ENCODE measurements at regions of chr17 and their contacts with region 1.

Region 1: DNA sequence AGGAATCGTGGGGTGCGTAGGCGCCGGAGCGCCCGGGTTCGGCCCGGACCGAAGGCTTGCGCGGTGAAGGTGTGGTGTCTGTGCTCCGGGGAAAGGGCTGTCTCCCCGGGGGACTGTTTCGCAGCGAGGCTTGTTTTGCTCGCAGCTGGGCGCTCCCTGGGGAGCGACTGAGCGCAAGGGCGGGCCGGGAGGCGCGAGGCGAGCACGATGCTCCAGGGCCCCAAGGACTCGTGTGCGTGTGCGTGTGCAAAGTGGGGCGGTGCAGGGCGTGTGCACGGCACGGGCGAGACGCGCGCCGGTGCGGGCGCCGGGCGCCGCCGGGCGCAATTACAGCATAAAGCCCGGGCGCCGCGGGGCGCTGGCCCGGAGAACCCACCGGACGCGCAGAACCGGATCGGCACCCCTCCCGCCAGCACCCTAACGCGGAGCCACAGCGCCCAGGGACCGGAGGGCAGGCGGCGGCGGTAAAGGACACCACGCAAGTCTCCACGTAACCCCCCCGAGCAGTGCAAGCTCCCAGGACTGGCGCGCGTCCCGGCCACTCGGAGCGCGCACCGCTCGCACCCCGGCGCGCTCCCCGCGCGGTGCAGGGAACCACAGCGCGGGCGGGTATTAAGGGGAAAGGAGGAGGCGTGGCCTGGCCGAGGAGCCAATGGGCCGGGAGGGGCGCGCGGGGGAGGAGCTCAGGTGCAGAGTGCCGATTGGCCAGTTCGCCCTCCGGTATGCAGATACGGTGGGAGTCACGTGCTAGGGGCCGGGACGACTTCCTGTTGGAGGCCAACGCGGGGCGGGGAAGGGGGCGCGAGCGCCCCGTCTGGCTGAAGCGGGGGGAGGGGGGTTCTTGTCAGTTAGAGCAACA is at the start of gene TNRC6C:
- DNase-seq: peak; percentile 99 to 100
- H3K4me3 ChIP-seq: peak within 1 kb of the TSS; percentile 54 to 81
- H3K27ac ChIP-seq: peak within 1 kb of the TSS; percentile 77 to 78
- H3K4me1 ChIP-seq: peaks cover 0 to 17% of the 10 kb centered on the region in 2 donors
- H3K27me3 ChIP-seq: no peaks in the 10 kb centered on the region
- CTCF ChIP-seq: peak in 1 of 3 experiments; percentile 16
- total RNA-seq, gene TNRC6C: 25.8 TPM

Region 2: DNA sequence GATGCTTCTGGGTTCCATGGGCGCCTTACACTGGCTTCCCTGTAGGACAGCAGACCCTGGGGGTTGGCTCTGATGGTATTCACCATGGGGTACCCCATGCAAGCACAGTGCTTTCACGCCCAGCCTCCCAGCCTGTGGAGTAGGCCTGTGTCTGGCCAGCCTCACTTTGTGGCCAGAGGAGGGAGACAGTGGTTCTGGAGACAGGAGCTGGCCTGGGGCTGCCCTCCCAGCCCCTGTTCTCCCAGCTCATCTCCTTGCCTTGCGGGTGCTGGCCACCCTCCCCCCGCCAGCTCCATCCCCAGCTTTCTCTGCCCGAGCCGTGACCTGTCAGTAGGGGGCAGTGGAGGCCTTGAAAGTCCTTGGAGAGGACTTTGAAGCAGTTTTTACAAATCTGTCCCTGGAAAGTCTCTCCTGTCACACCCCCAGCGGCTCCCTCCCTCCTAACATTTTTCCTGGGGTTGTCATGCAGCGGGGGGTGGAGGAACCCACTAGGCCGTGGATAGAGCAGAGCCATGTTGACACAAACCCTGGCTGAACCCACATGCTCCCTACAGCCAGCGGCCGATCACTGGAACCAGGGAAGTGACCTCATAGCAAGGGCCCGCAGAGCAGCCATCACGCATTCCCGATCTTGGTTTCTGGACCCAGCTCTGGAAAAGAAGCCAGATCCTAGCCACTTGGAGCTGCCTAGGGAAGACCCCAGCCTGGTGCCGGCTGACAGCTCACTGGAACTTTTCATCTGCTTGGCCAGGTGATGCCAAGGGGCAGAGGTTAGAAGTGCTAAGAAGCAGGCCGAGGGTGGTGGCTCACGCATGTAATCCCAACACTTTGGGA is 528.0 kb before region 1 on chr17:
- intact Hi-C with region 1: loop called (anchors 2 kb)
- DNase-seq: peak; percentile 90 to 98
- H3K4me3 ChIP-seq: no peak overlapping the region
- H3K27ac ChIP-seq: peak overlapping the region; percentile 79 to 81
- H3K4me1 ChIP-seq: peaks cover 32 to 50% of the 10 kb centered on the region in 2 donors
- H3K27me3 ChIP-seq: no peaks in the 10 kb centered on the region
- CTCF ChIP-seq: peak; percentile 85 to 93 (median 85)

Region 3: DNA sequence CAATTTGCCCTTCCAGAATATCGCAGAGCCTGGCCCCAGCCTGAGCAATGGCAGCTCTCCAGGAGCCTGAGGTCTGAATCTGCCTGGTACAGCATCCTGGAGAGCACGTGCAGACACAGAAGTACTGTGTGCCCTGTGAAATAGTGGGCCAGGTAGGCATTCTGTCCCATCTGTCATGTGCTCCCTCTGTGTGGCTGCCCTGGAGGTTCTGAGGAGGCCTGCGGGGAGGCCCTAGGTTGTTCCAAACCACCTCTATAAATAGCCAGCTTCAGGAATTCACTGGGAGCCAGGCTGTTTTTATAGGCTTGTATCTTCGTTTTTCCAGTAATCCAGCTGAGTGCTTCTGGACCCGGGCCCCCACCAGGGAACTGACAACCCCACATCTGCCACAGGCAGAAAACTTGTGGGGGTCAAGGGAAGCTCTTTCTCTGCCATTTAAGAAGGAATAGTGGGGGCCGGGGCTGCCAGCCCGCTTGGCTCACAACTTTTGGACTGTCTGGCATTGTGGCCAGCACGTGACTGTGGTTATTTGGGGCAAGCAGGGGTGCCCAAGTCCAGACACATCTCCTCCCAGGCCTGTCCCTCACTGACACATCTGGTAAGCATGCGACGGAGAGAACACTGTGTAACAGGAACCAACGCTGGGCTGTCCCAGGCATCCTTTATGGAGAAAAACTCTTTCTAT is 355.9 kb before region 1 on chr17:
- intact Hi-C with region 1: loop called (anchors 2 kb)
- DNase-seq: peak; percentile 72 to 95
- H3K4me3 ChIP-seq: peak overlapping the region; percentile 19 to 46
- H3K27ac ChIP-seq: peak overlapping the region; percentile 98 to 99
- H3K4me1 ChIP-seq: peaks cover 23 to 41% of the 10 kb centered on the region in 2 donors
- H3K27me3 ChIP-seq: no peaks in the 10 kb centered on the region
- CTCF ChIP-seq: no peak

Region 4: DNA sequence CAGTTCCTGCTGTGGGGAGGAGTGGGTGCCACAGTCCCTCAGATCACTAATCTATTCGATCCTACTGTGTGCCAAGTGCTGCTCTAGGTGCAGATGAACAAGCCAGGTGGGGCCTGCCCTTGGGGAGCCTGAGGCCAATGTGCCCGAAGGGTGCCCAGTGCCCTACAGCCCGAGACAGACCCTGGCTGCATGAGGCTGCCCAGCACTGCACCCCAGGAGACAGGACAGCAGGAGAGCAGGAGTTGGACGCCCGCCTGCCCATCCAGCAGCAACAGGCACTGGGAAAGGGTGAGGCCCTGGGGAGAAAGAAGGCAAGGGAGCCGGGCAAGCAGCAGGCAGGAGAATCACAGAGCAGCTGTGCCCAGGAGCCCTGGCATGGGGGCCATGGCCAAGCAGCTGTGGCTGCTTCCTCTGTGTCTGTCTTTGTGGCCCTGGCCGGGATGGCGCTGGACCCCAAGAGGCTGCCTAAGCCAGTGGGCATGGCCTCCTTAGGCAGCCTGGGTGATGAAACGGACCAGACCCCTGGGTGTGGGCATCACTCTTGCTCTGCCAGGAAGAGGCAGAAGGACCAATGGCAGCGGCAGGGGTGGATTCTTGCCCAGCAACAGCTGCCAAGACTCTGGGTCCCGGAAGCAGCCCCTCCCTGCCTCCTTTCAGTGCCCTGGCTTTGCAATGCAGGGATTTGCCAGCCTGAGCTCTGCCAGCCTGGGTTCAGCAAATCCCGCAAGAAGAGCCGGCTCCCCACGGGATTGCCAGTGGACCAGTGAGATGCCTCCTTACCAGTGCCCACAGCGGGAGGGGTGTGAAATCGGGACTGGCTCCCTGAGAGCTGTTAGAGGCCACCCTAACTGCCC is 179.2 kb before region 1 on chr17:
- intact Hi-C with region 1: loop called (anchors 5 kb)
- DNase-seq: peak; percentile 47 to 93
- H3K4me3 ChIP-seq: peak overlapping the region in 1 of 2 donors; percentile 37
- H3K27ac ChIP-seq: peak overlapping the region; percentile 83 to 91
- H3K4me1 ChIP-seq: peaks cover 16 to 30% of the 10 kb centered on the region in 2 donors
- H3K27me3 ChIP-seq: no peaks in the 10 kb centered on the region
- CTCF ChIP-seq: no peak

Region 5: DNA sequence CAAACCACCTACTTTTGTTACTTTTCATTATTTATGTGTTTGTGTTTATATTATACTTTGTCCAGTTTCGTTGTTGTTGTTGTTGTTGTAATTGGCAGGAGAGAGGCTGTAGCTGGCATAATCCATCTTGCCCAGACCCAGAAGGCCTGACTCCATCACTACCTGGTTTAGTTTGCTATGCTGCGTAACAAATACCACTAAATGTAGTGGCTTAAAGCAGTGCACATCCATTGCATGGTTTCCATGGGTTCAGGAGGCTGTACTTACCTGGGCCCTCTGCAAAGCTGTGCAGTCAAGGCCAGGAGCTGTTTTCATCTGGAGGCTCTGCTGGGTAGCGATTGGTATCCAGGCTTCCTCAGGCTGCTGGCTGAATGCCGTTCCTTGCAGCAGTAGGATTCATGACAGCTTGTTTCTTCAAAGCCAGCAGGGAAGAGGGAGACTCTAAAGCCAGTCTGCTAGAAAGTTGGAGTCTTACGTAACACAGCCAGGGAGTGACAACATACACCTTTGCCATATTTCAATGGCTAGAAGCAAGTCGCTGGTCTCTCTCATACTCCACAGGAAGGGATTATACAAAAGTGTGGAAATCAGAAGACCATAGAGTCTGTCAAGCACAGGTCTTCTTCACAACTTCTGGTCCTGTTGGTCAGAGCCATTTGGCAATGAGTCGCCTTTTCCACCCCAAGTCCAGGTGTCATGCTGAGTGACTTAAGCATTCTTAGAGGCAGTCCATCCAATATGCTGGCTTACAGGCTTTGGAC is 41.5 kb after region 1 on chr17:
- intact Hi-C with region 1: loop called (anchors 5 kb)
- DNase-seq: no peak
- H3K4me3 ChIP-seq: no peak overlapping the region
- H3K27ac ChIP-seq: peak overlapping the region; percentile 8 to 69
- H3K4me1 ChIP-seq: peaks cover 0 to 41% of the 10 kb centered on the region in 2 donors
- H3K27me3 ChIP-seq: no peaks in the 10 kb centered on the region
- CTCF ChIP-seq: no peak

Region 6: GRCh38 chr17:78112518-78113226 is 154.6 kb after region 1 on chr17:
- intact Hi-C with region 1: no loop called
- DNase-seq: peak in 1 of 2 donors; percentile 82
- H3K4me3 ChIP-seq: no peak overlapping the region
- H3K27ac ChIP-seq: no peak overlapping the region
- H3K4me1 ChIP-seq: peaks cover 0 to 4% of the 10 kb centered on the region in 2 donors
- H3K27me3 ChIP-seq: no peaks in the 10 kb centered on the region
- CTCF ChIP-seq: peak; percentile 97 to 100 (median 98)

Measured in ascending aorta (tissue), 2 donors.